Activated CD4-positive, alpha-beta T cell treated with anti-CD3 and anti-CD28 coated beads for 36 hours (primary cell): ENCODE measurements at regions of chr18 and their contacts with region 1.

Region 1: DNA sequence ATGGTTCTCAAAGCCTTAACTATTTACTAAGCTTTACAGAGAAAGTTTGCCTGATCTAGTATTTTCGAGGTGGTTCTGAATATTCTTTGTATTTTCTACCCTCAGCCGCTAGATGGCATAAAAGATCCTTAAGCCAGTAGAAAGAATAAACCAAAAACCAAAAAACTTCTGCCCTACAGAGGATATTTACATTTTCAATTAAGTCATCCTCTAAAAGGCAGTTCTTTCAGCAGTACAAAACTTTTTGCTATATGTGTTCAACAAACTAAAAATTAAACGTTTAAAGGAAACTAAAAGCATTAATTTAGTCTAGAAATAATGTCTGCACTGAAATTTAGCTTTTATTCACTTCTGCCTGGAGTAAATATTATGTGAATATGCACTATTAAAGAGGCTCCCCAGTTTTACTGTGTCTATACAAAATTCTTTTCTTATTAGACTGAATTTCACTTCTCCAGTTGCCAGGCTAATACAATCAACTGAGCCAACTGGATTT is 297.5 kb downstream of the PIEZO2 start:
- DNase-seq: no peak
- ATAC-seq: no peak
- H3K4me3 Mint-ChIP-seq: no peak overlapping the region
- H3K27ac Mint-ChIP-seq: no peak overlapping the region
- H3K4me1 Mint-ChIP-seq: no peaks in the 10 kb centered on the region
- H3K27me3 Mint-ChIP-seq: peaks cover 8% of the 10 kb centered on the region

Region 2: GRCh38 chr18:8969639-8970390 is 1882.1 kb before region 1 on chr18:
- CTCF ChIA-PET with region 1: no interaction called
- POLR2A ChIA-PET with region 1: no interaction called
- intact Hi-C with region 1: loop called in 1 of 2 experiments (anchors 10 kb)
- DNase-seq: no peak
- ATAC-seq: no peak
- H3K4me3 Mint-ChIP-seq: no peak overlapping the region
- H3K27ac Mint-ChIP-seq: no peak overlapping the region
- H3K4me1 Mint-ChIP-seq: no peaks in the 10 kb centered on the region
- H3K27me3 Mint-ChIP-seq: peaks cover 4% of the 10 kb centered on the region

Region 3: GRCh38 chr18:10705786-10706185 is 146.1 kb before region 1 on chr18:
- CTCF ChIA-PET with region 1: no interaction called
- POLR2A ChIA-PET with region 1: no interaction called
- intact Hi-C with region 1: no loop called
- DNase-seq: no peak
- ATAC-seq: no peak
- H3K4me3 Mint-ChIP-seq: no peak overlapping the region
- H3K27ac Mint-ChIP-seq: no peak overlapping the region
- H3K4me1 Mint-ChIP-seq: no peaks in the 10 kb centered on the region
- H3K27me3 Mint-ChIP-seq: peaks cover 4% of the 10 kb centered on the region

Region 4: DNA sequence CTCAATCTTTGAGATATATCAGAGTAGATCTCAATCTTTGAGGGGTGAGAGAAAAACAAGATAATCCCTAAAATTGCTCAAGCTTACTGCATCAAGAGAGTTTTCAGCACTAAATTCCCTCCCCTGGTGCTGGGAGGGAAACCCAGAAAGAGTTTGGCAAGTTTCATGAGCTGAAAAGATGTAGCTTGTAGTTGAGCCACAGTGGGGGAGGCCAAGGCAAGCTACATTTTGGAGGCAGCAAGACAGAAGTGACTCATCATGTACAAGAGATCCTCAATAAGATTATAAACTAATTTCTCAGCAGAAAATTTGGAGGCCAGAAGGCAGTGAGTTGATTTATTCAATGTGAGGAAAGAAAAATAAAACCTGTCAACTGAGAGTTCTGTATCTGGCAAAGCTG is 10.7 kb before region 1 on chr18:
- CTCF ChIA-PET with region 1: interaction called, 26 read pairs
- POLR2A ChIA-PET with region 1: no interaction called
- intact Hi-C with region 1: no loop called
- DNase-seq: no peak
- ATAC-seq: no peak
- H3K4me3 Mint-ChIP-seq: no peak overlapping the region
- H3K27ac Mint-ChIP-seq: no peak overlapping the region
- H3K4me1 Mint-ChIP-seq: no peaks in the 10 kb centered on the region
- H3K27me3 Mint-ChIP-seq: peaks cover 2% of the 10 kb centered on the region

Region 5: DNA sequence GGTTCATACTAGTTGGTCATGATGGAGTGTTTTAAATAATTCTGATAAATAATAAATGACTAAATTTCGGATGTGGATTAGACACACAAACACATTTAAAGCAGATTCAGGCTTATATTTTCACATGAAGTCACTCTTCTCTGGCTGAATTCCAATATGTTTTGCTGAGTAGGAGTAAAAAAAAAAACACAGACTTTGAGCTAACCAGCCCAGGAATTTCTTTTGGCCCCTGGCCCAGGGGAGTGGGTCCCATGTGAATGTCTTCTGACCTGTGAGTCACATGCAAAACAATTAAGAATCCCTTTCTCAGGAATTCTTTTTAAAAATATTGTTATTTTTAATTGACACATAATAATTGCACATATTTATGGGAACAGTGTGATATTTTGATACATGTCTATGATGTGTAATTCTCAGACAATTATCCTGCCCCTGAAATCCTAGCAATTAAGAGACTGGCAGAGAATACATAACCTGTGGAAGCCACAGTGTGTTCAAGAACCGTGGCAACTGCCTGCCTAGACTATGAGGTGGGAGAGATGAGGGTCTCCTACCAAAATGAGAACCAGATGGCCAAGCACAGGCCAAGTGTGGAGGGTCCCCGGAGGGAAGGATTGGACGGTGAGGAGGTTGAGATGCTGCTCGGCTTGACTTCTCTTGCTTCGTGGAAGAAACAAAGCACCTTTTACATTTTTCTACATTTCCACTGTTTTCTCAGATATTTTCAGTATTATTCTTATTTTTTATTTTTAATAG is 61.1 kb after region 1 on chr18:
- CTCF ChIA-PET with region 1: no interaction called
- POLR2A ChIA-PET with region 1: no interaction called
- intact Hi-C with region 1: no loop called
- DNase-seq: no peak
- ATAC-seq: no peak
- H3K4me3 Mint-ChIP-seq: no peak overlapping the region
- H3K27ac Mint-ChIP-seq: no peak overlapping the region
- H3K4me1 Mint-ChIP-seq: no peaks in the 10 kb centered on the region
- H3K27me3 Mint-ChIP-seq: no peaks in the 10 kb centered on the region

Region 6: GRCh38 chr18:11149441-11150270 is 297.8 kb after region 1 on chr18 and contains the start of gene PIEZO2:
- CTCF ChIA-PET with region 1: interaction called, 6 read pairs
- POLR2A ChIA-PET with region 1: no interaction called
- intact Hi-C with region 1: loop called (anchors 1 to 5 kb)
- DNase-seq: peak; percentile 44
- ATAC-seq: peak; percentile 42
- H3K4me3 Mint-ChIP-seq: no peak within 1 kb of the TSS
- H3K27ac Mint-ChIP-seq: no peak within 1 kb of the TSS
- H3K4me1 Mint-ChIP-seq: peaks cover 5% of the 10 kb centered on the region
- H3K27me3 Mint-ChIP-seq: peaks cover 34% of the 10 kb centered on the region
- total RNA-seq, gene PIEZO2: not detected

Region 7: GRCh38 chr18:11518788-11519685 is 667.2 kb after region 1 on chr18:
- CTCF ChIA-PET with region 1: no interaction called
- POLR2A ChIA-PET with region 1: no interaction called
- intact Hi-C with region 1: loop called in 1 of 2 experiments (anchors 1 kb)
- DNase-seq: peak; percentile 74
- ATAC-seq: peak; percentile 57
- H3K4me3 Mint-ChIP-seq: no peak overlapping the region
- H3K27ac Mint-ChIP-seq: no peak overlapping the region
- H3K4me1 Mint-ChIP-seq: no peaks in the 10 kb centered on the region
- H3K27me3 Mint-ChIP-seq: no peaks in the 10 kb centered on the region